Activated CD4-positive, alpha-beta T cell treated with anti-CD3 and anti-CD28 coated beads for 36 hours (primary cell): ENCODE measurements at regions of chr6 and their contacts with region 1.

Region 1: DNA sequence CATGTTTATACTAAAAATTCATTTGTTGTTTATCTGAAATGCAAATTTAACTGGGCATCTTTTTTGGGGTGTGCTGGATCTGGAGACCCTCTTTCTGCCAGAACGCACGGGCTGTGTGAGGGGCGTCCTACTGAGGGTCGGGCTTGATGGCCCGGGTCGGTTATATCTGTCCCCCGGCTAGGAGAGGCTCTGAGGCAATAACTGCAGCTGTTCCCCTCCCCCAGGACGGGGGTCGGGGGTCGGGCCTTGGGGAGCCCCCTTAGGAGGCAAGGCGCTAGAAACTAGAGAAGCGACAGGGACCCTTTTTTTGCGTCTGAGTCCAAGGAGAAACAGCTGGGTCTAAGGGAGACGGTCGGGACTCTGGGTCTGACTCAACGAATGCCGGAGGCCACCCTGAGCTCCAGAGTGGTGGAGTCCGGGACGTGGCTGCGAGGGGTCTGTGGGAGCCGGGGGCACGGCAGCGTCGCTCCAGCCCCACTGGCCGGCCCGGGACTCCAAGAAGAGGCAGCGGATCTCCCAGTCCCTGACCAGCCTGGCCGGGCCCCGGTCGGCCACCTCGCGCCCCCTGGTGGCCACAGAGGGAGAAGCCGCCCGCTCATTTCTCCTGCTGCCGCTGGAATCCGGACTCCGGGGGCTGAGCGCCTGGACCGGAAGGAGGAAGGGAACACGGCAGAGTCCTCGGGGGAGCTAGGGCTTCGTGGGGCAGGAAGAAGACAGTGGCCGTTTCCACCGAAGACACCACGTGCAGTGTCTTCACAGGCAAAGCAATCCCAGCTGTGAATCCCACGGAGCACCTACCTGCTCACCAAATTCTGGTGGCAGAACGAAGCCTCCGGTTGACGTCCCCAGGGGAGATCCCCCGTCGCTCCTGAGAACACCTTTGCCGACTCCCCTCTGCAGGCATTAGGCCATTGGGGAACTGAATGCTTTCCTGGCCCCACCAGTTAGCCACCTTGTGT is 24.0 kb upstream of the SCML4 start:
- DNase-seq: peak; percentile 88
- ATAC-seq: peak; percentile 91
- H3K4me3 Mint-ChIP-seq: peak overlapping the region; percentile 71
- H3K27ac Mint-ChIP-seq: peak overlapping the region; percentile 70
- H3K4me1 Mint-ChIP-seq: peaks cover 21% of the 10 kb centered on the region
- H3K27me3 Mint-ChIP-seq: no peaks in the 10 kb centered on the region

Region 2: GRCh38 chr6:107704347-107705013 is 143.6 kb before region 1 on chr6:
- CTCF ChIA-PET with region 1: interaction called, 9 read pairs
- POLR2A ChIA-PET with region 1: no interaction called
- intact Hi-C with region 1: loop called (anchors 1 to 2 kb)
- DNase-seq: peak; percentile 28
- ATAC-seq: no peak
- H3K4me3 Mint-ChIP-seq: no peak overlapping the region
- H3K27ac Mint-ChIP-seq: no peak overlapping the region
- H3K4me1 Mint-ChIP-seq: peaks cover 26% of the 10 kb centered on the region
- H3K27me3 Mint-ChIP-seq: no peaks in the 10 kb centered on the region

Region 3: GRCh38 chr6:107740496-107741190 is 107.5 kb before region 1 on chr6:
- CTCF ChIA-PET with region 1: interaction called, 21 read pairs
- POLR2A ChIA-PET with region 1: no interaction called
- intact Hi-C with region 1: no loop called
- DNase-seq: peak; percentile 53
- ATAC-seq: peak; percentile 68
- H3K4me3 Mint-ChIP-seq: peak overlapping the region; percentile 64
- H3K27ac Mint-ChIP-seq: peak overlapping the region; percentile 92
- H3K4me1 Mint-ChIP-seq: peaks cover 68% of the 10 kb centered on the region
- H3K27me3 Mint-ChIP-seq: no peaks in the 10 kb centered on the region

Region 4: GRCh38 chr6:107794771-107795170 is 53.4 kb before region 1 on chr6:
- CTCF ChIA-PET with region 1: interaction called, 16 read pairs
- POLR2A ChIA-PET with region 1: interaction called, 3 read pairs
- intact Hi-C with region 1: no loop called
- DNase-seq: no peak
- ATAC-seq: peak; percentile 45
- H3K4me3 Mint-ChIP-seq: no peak overlapping the region
- H3K27ac Mint-ChIP-seq: peak overlapping the region; percentile 63
- H3K4me1 Mint-ChIP-seq: peaks cover 70% of the 10 kb centered on the region
- H3K27me3 Mint-ChIP-seq: no peaks in the 10 kb centered on the region

Region 5: GRCh38 chr6:107820338-107821261 is 27.5 kb before region 1 on chr6:
- CTCF ChIA-PET with region 1: interaction called, 31 read pairs
- POLR2A ChIA-PET with region 1: no interaction called
- intact Hi-C with region 1: loop called (anchors 1 to 2 kb)
- DNase-seq: peak; percentile 60
- ATAC-seq: no peak
- H3K4me3 Mint-ChIP-seq: peak overlapping the region; percentile 87
- H3K27ac Mint-ChIP-seq: peak overlapping the region; percentile 98
- H3K4me1 Mint-ChIP-seq: peaks cover 84% of the 10 kb centered on the region
- H3K27me3 Mint-ChIP-seq: no peaks in the 10 kb centered on the region

Region 6: DNA sequence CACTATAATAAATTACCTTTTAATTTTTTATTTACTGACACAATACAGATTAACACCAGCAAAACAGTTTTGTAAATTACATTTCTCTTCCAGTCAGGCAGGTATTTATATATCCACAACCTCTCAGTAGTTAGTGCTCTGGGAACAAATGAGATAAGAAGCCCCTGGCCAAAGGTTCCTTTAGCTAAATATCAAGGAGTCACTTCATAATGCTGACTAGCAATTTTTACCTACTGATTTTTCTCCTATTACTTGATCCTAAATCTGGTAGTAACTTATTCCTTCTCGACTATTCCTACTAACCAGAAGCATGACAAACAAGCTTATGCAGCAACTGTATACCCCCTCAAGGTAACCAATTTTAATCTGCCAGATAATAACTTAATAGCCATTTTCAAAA is 63.6 kb after region 1 on chr6:
- CTCF ChIA-PET with region 1: no interaction called
- POLR2A ChIA-PET with region 1: no interaction called
- intact Hi-C with region 1: no loop called
- DNase-seq: no peak
- ATAC-seq: no peak
- H3K4me3 Mint-ChIP-seq: no peak overlapping the region
- H3K27ac Mint-ChIP-seq: no peak overlapping the region
- H3K4me1 Mint-ChIP-seq: peaks cover 2% of the 10 kb centered on the region
- H3K27me3 Mint-ChIP-seq: no peaks in the 10 kb centered on the region

Region 7: DNA sequence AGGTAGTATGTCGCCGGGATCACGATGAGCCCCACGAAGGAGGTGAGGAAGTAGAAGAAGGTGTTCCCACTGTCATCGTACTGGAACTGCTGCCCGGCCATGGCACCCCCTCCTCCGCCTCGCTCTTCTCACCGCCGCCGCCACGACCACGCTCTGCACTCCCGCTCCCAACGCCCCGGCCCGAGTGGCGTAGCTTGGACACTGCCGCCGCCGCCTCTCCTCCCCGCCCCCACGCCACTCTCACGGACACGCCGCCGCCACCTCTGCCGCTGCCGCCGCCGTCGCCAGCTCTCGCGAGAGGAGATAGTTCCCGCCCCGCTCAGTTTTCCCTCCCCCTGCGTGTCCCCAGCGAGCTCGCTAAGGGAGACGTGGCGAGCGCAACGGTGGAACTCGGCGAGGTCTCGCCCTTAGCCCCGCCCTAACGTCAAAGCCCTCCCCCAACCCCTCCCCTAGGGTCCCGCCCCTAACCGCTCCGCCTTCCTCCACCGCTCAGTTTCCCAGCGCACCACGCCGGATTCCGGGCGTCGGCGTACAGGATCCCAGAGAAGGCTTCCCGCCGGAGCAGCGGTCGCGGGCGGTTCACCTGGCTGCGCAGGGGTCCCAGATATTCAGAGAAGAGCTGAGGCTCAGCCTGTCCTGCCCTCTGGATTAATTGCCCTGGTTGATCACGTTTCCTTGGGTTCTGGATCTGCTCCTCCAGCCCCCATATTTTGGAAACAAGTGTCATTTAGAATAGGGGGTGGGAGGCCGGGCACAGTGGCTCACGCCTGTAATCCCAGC is 110.0 kb after region 1 on chr6 and contains the start of gene SEC63:
- CTCF ChIA-PET with region 1: no interaction called
- POLR2A ChIA-PET with region 1: no interaction called
- intact Hi-C with region 1: no loop called
- DNase-seq: peak; percentile 98
- ATAC-seq: peak; percentile 98
- H3K4me3 Mint-ChIP-seq: peak within 1 kb of the TSS; percentile 100
- H3K27ac Mint-ChIP-seq: peak within 1 kb of the TSS; percentile 99
- H3K4me1 Mint-ChIP-seq: peaks cover 36% of the 10 kb centered on the region
- H3K27me3 Mint-ChIP-seq: peaks cover 2% of the 10 kb centered on the region
- total RNA-seq, gene SEC63: 98.7 to 100 TPM